Spleen (tissue), 13 donors: ENCODE measurements at regions of chr16 and their contacts with region 1.

Region 1: DNA sequence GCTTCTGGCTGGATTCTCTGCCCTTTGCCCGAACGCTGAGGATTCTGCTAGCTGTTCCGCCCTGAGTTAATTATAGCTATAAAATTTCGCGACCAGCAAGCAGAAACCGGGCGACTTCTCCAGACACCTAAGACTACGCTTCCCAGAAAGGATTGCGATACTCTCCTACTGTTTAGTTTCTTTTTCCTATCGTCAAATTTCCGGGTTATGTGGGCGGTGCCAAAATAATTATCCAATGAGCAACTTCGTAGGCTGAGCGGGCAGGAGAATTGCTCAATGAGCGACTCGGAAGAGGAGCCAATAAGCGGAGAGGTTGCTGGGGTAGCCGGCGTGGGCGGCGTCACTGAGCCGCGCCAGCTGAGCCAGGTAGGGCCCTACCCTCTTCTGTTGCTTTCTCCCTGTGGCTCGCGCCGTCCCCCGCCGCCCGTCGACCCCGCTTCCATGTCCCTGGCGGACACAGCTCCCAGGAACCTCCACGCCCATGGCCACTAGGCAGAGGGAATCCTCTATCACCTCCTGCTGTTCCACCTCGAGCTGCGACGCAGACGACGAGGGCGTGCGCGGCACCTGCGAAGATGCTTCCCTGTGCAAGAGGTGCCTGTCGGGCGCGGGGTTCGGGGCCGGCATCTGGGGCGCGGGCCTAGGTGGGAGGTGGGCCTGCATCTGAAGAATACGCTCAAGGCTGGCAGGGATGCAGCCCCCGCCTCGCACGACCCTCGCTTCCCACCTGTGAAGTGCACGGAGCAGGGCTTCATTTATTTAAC is at the start of gene LCMT1:
- DNase-seq: peak; percentile 97
- H3K4me3 ChIP-seq: peak within 1 kb of the TSS; percentile 71 to 99 (median 81)
- H3K27ac ChIP-seq: peak within 1 kb of the TSS; percentile 63 to 88 (median 82)
- H3K4me1 ChIP-seq: peaks cover 20 to 72% (median 50%) of the 10 kb centered on the region in 6 donors
- H3K27me3 ChIP-seq: no peaks in the 10 kb centered on the region
- CTCF ChIP-seq: peak in 2 of 11 experiments; percentile 14 to 33
- POLR2A ChIP-seq: no peak
- total RNA-seq, gene LCMT1: 25.8 to 33.3 (median 29.0) TPM

Region 2: DNA sequence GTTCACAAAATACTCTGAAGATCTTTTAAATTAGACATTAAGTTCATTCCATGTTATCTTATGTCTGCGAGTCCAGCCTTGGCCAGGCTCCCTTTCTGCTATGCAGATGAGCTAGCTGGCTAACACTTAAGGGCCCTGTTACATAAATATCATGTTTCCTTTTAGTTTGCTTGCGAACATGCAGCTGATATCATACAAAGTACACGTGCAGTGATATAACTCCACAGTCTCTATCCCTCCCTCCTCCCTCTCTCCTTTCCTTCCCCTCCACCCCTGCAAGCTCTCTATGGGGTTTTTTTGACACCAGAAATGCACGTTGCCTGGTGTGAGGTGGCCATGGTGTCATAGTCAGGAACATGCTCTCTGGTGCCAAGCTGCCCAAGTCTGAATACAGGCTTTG is 142.5 kb before region 1 on chr16:
- intact Hi-C with region 1: loop called (anchors 10 kb)
- DNase-seq: no peak
- H3K4me3 ChIP-seq: no peak overlapping the region
- H3K27ac ChIP-seq: peak overlapping the region in 3 of 8 donors; percentile 42 to 82 (median 60)
- H3K4me1 ChIP-seq: peaks cover 17 to 52% (median 41%) of the 10 kb centered on the region in 6 donors
- H3K27me3 ChIP-seq: no peaks in the 10 kb centered on the region
- CTCF ChIP-seq: no peak
- POLR2A ChIP-seq: no peak

Region 3: GRCh38 chr16:25051406-25052150 is 60.0 kb before region 1 on chr16:
- intact Hi-C with region 1: loop called (anchors 5 kb)
- DNase-seq: no peak
- H3K4me3 ChIP-seq: peak overlapping the region in 3 of 8 donors; percentile 9 to 48 (median 16)
- H3K27ac ChIP-seq: peak overlapping the region; percentile 0 to 97 (median 82)
- H3K4me1 ChIP-seq: peaks cover 21 to 74% (median 42%) of the 10 kb centered on the region in 6 donors
- H3K27me3 ChIP-seq: no peaks in the 10 kb centered on the region
- CTCF ChIP-seq: no peak
- POLR2A ChIP-seq: no peak